WTC11 (cell line): ENCODE measurements at regions of chr4 and their contacts with region 1.

Region 1: GRCh38 chr4:86921608-86922252 is 13.1 kb upstream of the AFF1 start:
- DNase-seq: no peak
- ATAC-seq: no peak
- H3K4me3 Mint-ChIP-seq: no peak overlapping the region
- H3K27ac Mint-ChIP-seq: no peak overlapping the region
- H3K4me1 Mint-ChIP-seq: peaks cover 5% of the 10 kb centered on the region; the same call in 1 of the 2 replicates
- H3K27me3 Mint-ChIP-seq: peaks cover 2% of the 10 kb centered on the region; the same call in 1 of the 2 replicates
- CTCF ChIP-seq: no peak

Region 2: DNA sequence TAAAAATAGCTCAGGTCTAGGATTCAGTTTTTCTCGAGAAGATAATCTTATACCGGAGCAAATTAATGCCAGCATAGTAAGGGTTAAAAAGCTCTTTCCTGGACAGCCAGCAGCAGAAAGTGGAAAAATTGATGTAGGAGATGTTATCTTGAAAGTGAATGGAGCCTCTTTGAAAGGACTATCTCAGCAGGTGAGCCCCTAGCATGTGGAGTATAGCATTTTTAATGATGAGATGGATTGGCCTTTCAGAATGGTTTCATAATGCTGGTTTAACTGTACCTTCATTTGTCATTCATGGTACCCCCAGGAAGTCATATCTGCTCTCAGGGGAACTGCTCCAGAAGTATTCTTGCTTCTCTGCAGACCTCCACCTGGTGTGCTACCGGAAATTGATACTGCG is 151.9 kb before region 1 on chr4:
- CTCF ChIA-PET with region 1: no interaction called
- POLR2A ChIA-PET with region 1: no interaction called
- DNase-seq: no peak
- ATAC-seq: no peak
- H3K4me3 Mint-ChIP-seq: no peak overlapping the region
- H3K27ac Mint-ChIP-seq: no peak overlapping the region
- H3K4me1 Mint-ChIP-seq: no peaks in the 10 kb centered on the region
- H3K27me3 Mint-ChIP-seq: no peaks in the 10 kb centered on the region
- CTCF ChIP-seq: no peak

Region 3: DNA sequence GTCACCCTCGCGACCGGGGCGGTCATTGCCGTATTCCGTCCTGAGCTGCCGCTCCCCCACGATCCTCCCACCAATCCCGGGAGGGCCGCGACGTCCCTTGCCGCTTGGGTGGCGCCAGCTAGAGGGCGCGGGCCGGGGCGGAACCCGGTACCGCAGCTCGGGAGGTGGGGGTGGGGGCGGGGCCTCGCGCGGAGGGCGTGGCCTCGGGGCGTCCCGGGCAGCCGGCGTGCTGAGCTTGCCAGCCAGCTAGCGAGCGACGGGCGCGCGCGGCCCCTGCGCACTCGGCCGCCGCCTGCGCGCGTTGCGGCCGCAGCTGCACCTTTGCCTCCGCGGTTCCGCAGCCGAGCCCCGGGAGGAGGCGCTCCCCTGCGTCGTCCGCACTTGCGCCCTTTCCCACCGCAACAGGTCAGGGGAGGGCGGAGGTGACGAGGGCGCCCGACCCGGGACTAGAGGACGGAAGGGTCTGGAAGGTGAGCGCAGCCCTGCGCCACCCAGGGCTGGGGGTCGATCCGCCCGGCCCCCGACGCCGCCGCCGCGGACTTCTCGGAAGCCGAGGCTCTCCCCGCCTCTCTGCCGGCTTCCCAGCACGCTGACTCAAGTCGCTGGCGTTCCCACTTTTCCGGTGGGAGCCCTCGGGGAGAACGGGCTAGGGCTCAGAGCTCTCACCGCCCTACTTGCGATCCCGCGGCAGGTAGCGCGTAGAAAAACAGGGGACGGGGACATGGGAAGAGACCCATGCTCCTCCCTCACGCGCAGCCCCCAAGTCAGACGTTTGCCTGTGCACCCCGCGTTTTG is 13.2 kb after region 1 on chr4 and contains the start of gene AFF1:
- CTCF ChIA-PET with region 1: interaction called, 64 read pairs
- POLR2A ChIA-PET with region 1: interaction called, 10 read pairs
- DNase-seq: peak; percentile 93
- ATAC-seq: peak; percentile 84
- H3K4me3 Mint-ChIP-seq: peak within 1 kb of the TSS; percentile 81
- H3K27ac Mint-ChIP-seq: peak within 1 kb of the TSS; percentile 95
- H3K4me1 Mint-ChIP-seq: peaks cover 44% of the 10 kb centered on the region
- H3K27me3 Mint-ChIP-seq: no peaks in the 10 kb centered on the region
- CTCF ChIP-seq: no peak
- total RNA-seq, gene AFF1: 72.6 to 93.4 TPM (median 83.9 TPM) in 3 replicates

Region 4: GRCh38 chr4:87006676-87007527 is 85.2 kb after region 1 on chr4:
- CTCF ChIA-PET with region 1: interaction called, 18 read pairs
- POLR2A ChIA-PET with region 1: interaction called, 4 read pairs
- DNase-seq: peak; percentile 93
- ATAC-seq: peak; percentile 87
- H3K4me3 Mint-ChIP-seq: peak overlapping the region; percentile 90
- H3K27ac Mint-ChIP-seq: peak overlapping the region; percentile 96
- H3K4me1 Mint-ChIP-seq: peaks cover 81% of the 10 kb centered on the region
- H3K27me3 Mint-ChIP-seq: no peaks in the 10 kb centered on the region
- CTCF ChIP-seq: no peak

Region 5: GRCh38 chr4:87053802-87054767 is 132.4 kb after region 1 on chr4:
- CTCF ChIA-PET with region 1: interaction called, 31 read pairs
- POLR2A ChIA-PET with region 1: no interaction called
- DNase-seq: no peak
- ATAC-seq: peak; percentile 50
- H3K4me3 Mint-ChIP-seq: no peak overlapping the region
- H3K27ac Mint-ChIP-seq: peak overlapping the region; percentile 75
- H3K4me1 Mint-ChIP-seq: peaks cover 65% of the 10 kb centered on the region
- H3K27me3 Mint-ChIP-seq: no peaks in the 10 kb centered on the region
- CTCF ChIP-seq: no peak

Region 6: DNA sequence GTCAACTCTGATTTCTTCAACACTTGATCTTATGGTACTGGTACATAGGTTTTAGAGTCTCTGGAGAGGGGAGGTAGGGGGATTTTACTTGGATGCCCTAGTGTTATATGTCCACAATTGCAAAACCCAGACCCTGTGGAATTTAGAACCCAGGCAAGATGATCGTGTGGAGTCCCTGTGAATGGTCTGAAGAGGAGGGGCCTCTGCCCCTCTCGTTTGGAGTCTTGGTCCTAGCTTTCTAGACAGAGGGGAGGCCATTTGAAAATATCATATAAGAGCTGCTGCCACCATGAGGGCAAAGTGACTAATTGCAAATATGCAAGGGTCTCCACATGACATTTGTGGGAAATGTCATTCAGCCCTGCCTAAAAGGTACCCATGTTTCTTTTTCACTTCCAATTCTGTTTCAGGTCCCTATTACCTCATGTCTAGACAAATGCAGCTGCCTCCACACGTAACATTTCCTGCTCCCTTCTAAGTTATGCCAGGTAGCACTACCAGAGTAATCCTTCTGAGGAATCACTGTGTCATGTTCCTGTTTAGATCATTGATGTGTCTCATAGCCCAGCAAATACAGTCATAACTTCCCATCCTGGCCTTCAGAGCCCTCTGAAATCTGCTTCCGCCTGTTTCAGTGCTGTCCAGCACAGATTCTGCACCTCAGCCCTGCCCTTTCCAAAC is 171.9 kb after region 1 on chr4:
- CTCF ChIA-PET with region 1: interaction called, 68 read pairs
- POLR2A ChIA-PET with region 1: interaction called, 6 read pairs
- DNase-seq: peak; percentile 34
- ATAC-seq: peak; percentile 73
- H3K4me3 Mint-ChIP-seq: no peak overlapping the region
- H3K27ac Mint-ChIP-seq: no peak overlapping the region
- H3K4me1 Mint-ChIP-seq: peaks cover 30% of the 10 kb centered on the region
- H3K27me3 Mint-ChIP-seq: no peaks in the 10 kb centered on the region
- CTCF ChIP-seq: no peak

Region 7: DNA sequence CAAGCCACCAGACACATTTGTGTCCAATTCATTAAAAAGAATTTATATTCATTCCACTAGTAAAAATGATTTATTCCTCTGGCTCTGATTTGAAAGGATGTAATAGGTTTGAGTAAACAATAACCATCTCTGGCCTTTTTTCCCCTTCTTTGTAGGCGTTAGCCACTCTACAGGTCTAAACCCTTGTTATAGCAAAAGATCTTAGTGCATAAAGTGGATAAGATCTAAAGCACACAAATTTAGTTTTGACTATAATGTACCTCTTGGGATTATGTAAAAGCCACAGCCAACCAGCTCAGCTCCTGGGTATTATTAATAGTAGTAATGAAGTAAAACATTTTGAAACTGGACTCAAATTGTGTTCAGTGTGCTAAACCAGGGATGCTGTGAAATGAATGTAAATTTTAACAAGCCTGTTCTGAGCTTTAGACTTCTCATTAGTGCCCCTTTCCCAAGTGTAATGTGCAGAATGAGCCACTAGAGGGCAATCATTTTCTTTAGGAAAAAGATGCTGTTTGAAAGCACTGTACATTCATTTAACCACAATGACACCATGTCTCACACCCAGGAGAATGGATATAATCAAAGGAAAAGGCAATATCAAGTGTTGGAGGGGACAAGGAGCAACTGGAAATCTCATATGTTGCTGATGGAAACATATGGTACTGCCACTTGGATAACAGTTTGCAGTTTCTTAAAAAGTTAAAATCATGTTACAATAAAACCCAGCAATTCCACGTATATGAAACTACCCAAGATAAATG is 228.9 kb after region 1 on chr4:
- CTCF ChIA-PET with region 1: interaction called, 14 read pairs
- POLR2A ChIA-PET with region 1: no interaction called
- DNase-seq: peak; percentile 29
- ATAC-seq: peak; percentile 52
- H3K4me3 Mint-ChIP-seq: no peak overlapping the region
- H3K27ac Mint-ChIP-seq: no peak overlapping the region
- H3K4me1 Mint-ChIP-seq: peaks cover 17% of the 10 kb centered on the region
- H3K27me3 Mint-ChIP-seq: no peaks in the 10 kb centered on the region
- CTCF ChIP-seq: peak; percentile 90